Activated naive CD4-positive, alpha-beta T cell treated with anti-CD3 and anti-CD28 coated beads, Interleukin-2, amount 10 ng/mL, durations not matched to agents 7 days and 5 days (primary cell): ENCODE measurements at regions of chr13 and their contacts with region 1.

Region 1: GRCh38 chr13:32586080-32586900 is at the start of gene PDS5B:
- DNase-seq: peak; percentile 95
- H3K4me3 Mint-ChIP-seq: peak within 1 kb of the TSS; percentile 96
- H3K27ac Mint-ChIP-seq: peak within 1 kb of the TSS; percentile 96
- H3K4me1 Mint-ChIP-seq: peaks cover 40% of the 10 kb centered on the region
- H3K27me3 Mint-ChIP-seq: peaks cover 11% of the 10 kb centered on the region

Region 2: GRCh38 chr13:32650705-32651311 is 64.5 kb after region 1 on chr13:
- CTCF ChIA-PET with region 1: interaction called, 18 read pairs
- DNase-seq: peak; percentile 69
- H3K4me3 Mint-ChIP-seq: no peak overlapping the region
- H3K27ac Mint-ChIP-seq: no peak overlapping the region
- H3K4me1 Mint-ChIP-seq: peaks cover 27% of the 10 kb centered on the region
- H3K27me3 Mint-ChIP-seq: no peaks in the 10 kb centered on the region

Region 3: DNA sequence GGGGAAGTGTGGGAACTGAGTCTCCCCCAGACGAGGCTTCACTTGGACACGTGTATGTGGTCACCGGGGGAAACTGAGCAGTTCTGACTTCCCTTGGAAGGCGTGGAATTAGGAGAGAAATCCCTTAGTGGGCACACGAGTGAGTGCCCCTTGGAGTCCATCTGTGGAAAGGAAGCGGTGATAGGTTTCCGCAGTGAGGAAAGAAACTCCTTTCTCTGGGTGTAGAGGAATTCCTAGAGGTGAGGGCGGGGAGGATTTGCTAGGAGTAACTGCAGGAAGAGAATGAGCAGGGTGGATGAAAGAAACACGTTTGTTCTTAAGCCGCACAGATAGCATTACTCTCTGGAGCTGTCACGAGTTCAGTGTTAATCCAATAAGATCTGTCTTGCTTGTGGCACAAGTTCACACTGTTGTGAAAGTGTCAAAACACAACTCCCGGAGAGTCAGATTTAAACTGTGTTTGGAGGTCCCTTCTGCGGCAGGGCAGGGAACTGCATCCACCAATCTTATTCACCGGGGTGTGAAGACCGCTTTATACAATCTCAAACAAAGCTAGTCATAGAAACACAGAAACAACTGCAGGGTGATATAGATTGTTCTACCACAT is 431.1 kb after region 1 on chr13:
- CTCF ChIA-PET with region 1: interaction called, 11 read pairs
- DNase-seq: peak; percentile 69
- H3K4me3 Mint-ChIP-seq: peak overlapping the region; percentile 67
- H3K27ac Mint-ChIP-seq: peak overlapping the region; percentile 39
- H3K4me1 Mint-ChIP-seq: peaks cover 17% of the 10 kb centered on the region
- H3K27me3 Mint-ChIP-seq: peaks cover 77% of the 10 kb centered on the region